Ovary (tissue), 10 donors: ENCODE measurements at regions of chrX and their contacts with region 1.

Region 1: GRCh38 chrX:125319646-125320521 is at the start of gene TEX13C:
- DNase-seq: no peak
- H3K4me3 ChIP-seq: no peak within 1 kb of the TSS
- H3K27ac ChIP-seq: no peak within 1 kb of the TSS
- H3K4me1 ChIP-seq: no peaks in the 10 kb centered on the region
- H3K27me3 ChIP-seq: no peaks in the 10 kb centered on the region
- CTCF ChIP-seq: no peak
- EP300 ChIP-seq: no peak
- POLR2A ChIP-seq: no peak
- total RNA-seq, gene TEX13C: under 0.01 TPM in 1 of 7 donors, not detected in the others

Region 2: DNA sequence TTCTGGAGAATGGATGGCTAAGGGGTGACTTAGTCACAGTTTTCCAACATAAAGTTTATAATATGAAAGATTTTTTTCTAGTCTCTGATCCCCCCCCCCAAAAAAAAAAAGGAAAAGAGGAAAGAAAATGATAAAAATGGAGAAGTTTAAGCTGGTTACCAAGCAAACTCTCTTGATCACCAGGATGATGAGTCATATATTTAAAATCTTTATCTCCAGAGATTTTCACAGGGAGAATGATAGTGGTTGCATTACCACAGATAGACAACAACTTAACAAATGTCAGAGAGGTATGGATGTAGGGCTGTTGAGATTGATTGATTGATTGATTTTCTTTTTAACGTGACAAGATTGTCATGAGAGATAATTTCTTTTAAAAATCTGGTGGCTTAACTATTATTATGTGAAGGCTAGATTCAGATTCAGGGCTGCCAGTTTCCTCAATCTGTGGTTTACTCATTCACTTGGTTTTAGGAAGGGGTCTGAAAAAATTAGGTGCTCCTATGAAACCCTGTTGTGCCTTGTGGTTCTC is 13.5 kb before region 1 on chrX:
- intact Hi-C with region 1: loop called in 1 of 4 experiments (anchors 1 kb)
- DNase-seq: no peak
- H3K4me3 ChIP-seq: no peak overlapping the region
- H3K27ac ChIP-seq: no peak overlapping the region
- H3K4me1 ChIP-seq: no peaks in the 10 kb centered on the region
- H3K27me3 ChIP-seq: no peaks in the 10 kb centered on the region
- CTCF ChIP-seq: no peak
- EP300 ChIP-seq: no peak
- POLR2A ChIP-seq: no peak